ENCODE measurements at regions of chr19 and their contacts with region 1.

Region 1: DNA sequence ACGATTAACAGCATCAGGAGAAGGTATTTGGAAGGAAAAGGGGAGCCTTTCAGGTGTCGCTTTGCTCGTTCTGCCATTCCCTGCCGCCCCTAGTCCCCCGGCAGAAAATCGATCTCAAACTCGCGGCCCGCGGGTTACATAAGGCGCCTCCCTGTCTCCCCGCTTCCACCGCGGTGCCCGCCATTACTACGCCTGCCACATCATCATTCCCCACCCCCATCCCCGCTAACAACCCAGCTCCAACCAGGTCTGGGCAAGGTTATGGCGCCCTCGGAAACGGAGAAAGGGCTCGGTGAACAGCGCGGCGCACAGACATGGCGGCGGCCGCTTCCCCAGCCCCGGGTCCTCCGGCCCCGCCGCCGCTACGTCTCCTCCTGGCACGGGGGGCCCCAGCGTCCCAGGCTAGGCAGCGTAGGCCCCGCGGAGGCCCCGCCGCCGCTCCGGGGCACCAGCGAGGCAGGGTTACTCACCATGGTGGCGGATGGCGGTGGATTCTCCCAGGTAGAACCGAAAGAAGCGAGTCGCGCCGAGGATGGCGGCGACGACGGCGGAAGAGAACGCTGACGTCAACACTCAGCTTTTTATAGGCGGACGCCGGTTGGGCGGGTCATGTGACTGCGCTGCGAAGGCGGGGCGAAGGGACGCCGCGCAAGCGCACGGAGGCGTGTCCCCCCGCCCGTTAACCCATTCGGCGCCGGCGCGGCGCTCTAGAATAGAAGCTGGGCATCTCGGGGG is at the start of gene EEF2:
- H3K4me3 ChIP-seq: peak within 1 kb of the TSS; percentile 99
- H3K27ac ChIP-seq: peak within 1 kb of the TSS; percentile 100
- H3K4me1 ChIP-seq: peaks cover 11% of the 10 kb centered on the region; the same call in 1 of the 2 replicates
- CTCF ChIP-seq: no peak

Region 2: GRCh38 chr19:3762501-3763459 is 222.3 kb before region 1 on chr19 and contains the start of gene MRPL54:
- CTCF ChIA-PET with region 1: no interaction called
- POLR2A ChIA-PET with region 1: interaction called, 10 read pairs
- H3K4me3 ChIP-seq: peak within 1 kb of the TSS; percentile 96
- H3K27ac ChIP-seq: peak within 1 kb of the TSS; percentile 68
- H3K4me1 ChIP-seq: no peaks in the 10 kb centered on the region; the same call in 1 of the 2 replicates
- CTCF ChIP-seq: no peak

Region 3: DNA sequence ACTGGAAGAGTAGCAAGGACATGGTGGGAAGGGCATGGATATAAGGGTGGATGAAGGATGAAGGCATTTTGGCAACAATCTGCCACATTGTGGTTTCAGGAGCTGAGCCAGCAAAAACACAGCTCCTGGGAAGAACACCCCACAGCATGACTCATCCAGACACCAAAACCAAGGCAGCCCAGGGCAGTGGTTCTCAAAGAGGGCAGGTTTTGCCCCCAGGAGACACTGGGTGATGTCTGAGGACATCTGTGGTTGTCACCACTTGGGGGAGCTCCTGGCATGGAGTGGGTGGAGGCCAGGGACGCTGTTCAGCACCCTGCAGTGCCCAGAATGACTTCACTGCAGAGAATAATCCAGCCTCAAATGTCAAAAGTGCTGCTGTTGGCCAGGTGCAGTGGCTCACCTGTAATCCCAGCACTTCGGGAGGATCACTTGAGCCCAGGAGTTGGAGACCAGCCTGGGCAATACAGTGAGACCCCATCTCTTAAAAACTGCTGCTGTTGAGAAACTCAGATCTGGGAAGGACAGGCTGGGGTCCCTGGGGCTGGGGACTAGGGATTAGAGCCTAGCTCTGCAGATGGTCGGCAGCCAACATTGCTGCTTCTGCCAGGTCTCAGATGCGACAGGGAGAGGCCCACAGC is 132.3 kb before region 1 on chr19:
- CTCF ChIA-PET with region 1: interaction called, 10 read pairs
- POLR2A ChIA-PET with region 1: interaction called, 10 read pairs
- H3K4me3 ChIP-seq: no peak overlapping the region
- H3K27ac ChIP-seq: no peak overlapping the region
- H3K4me1 ChIP-seq: no peaks in the 10 kb centered on the region
- CTCF ChIP-seq: no peak

Region 4: DNA sequence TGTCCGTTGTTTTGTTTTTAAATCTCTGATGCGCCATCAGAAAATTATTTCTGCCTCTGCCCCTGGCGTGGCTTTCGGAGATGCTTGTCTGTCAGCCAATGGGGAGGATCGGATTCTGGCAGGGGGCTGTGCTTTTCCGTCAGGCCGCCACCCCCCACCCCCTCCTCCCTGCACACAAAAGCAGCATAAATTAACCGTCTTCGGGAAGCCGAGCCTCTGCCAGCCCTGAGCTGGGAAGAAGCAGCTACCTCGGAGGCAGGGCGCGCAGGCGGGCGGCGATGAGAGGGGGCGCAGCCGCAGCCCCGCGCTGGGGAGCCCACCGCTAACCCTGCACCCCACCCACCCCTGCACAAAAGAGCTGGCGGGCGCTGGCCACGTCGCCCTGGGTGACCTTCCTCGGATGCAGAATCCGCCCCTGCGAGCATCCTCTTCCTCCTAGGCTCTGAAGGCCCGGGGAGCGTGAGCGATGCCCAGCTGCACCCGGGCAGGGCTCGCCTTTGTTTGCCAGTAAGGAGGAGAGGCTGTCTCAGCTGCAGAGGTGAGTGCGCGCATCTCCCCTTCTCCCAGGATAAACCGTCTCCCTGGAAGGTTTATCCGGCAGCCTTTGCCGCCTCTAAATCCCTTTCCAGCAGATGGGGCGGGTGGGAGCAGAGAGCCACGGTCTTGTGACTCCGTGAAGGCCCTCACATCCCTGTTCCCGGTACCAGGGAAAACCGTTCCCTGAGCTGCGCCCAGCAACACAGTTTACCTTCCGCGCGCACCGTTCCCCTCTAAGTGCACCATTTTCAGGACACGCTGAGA is 104.4 kb before region 1 on chr19 and contains the start of gene ATCAY:
- CTCF ChIA-PET with region 1: no interaction called
- POLR2A ChIA-PET with region 1: no interaction called
- H3K4me3 ChIP-seq: no peak within 1 kb of the TSS
- H3K27ac ChIP-seq: no peak within 1 kb of the TSS
- H3K4me1 ChIP-seq: no peaks in the 10 kb centered on the region
- CTCF ChIP-seq: no peak

Region 5: GRCh38 chr19:3942790-3943409 is 42.2 kb before region 1 on chr19:
- CTCF ChIA-PET with region 1: no interaction called
- POLR2A ChIA-PET with region 1: no interaction called
- H3K4me3 ChIP-seq: no peak overlapping the region
- H3K27ac ChIP-seq: no peak overlapping the region
- H3K4me1 ChIP-seq: no peaks in the 10 kb centered on the region
- CTCF ChIP-seq: no peak

Region 6: GRCh38 chr19:3970808-3971598 is 14.1 kb before region 1 on chr19 and contains the start of gene DAPK3:
- CTCF ChIA-PET with region 1: interaction called, 10 read pairs
- POLR2A ChIA-PET with region 1: interaction called, 258 read pairs
- H3K4me3 ChIP-seq: peak within 1 kb of the TSS; percentile 93
- H3K27ac ChIP-seq: peak within 1 kb of the TSS; percentile 90
- H3K4me1 ChIP-seq: peaks cover 17% of the 10 kb centered on the region
- CTCF ChIP-seq: no peak

Region 7: GRCh38 chr19:3995627-3996026 is 10.6 kb after region 1 on chr19:
- CTCF ChIA-PET with region 1: interaction called, 13 read pairs
- POLR2A ChIA-PET with region 1: interaction called, 4 read pairs
- H3K4me3 ChIP-seq: no peak overlapping the region
- H3K27ac ChIP-seq: no peak overlapping the region
- H3K4me1 ChIP-seq: no peaks in the 10 kb centered on the region
- CTCF ChIP-seq: no peak

Region 8: GRCh38 chr19:4007021-4007835 is 22.2 kb after region 1 on chr19 and contains the start of gene PIAS4:
- CTCF ChIA-PET with region 1: interaction called, 12 read pairs
- POLR2A ChIA-PET with region 1: interaction called, 29 read pairs
- H3K4me3 ChIP-seq: peak within 1 kb of the TSS; percentile 89
- H3K27ac ChIP-seq: peak within 1 kb of the TSS; percentile 92
- H3K4me1 ChIP-seq: peaks cover 10% of the 10 kb centered on the region
- CTCF ChIP-seq: peak; percentile 85

Region 9: GRCh38 chr19:4123615-4124568 is 138.8 kb after region 1 on chr19 and contains the start of gene MAP2K2:
- CTCF ChIA-PET with region 1: no interaction called
- POLR2A ChIA-PET with region 1: no interaction called
- H3K4me3 ChIP-seq: peak within 1 kb of the TSS; percentile 98
- H3K27ac ChIP-seq: peak within 1 kb of the TSS; percentile 90; the same call in 1 of the 2 replicates
- H3K4me1 ChIP-seq: peaks cover 6% of the 10 kb centered on the region; the same call in 1 of the 2 replicates
- CTCF ChIP-seq: no peak